ENCODE measurements at regions of chr5 and their contacts with region 1.

Region 1: DNA sequence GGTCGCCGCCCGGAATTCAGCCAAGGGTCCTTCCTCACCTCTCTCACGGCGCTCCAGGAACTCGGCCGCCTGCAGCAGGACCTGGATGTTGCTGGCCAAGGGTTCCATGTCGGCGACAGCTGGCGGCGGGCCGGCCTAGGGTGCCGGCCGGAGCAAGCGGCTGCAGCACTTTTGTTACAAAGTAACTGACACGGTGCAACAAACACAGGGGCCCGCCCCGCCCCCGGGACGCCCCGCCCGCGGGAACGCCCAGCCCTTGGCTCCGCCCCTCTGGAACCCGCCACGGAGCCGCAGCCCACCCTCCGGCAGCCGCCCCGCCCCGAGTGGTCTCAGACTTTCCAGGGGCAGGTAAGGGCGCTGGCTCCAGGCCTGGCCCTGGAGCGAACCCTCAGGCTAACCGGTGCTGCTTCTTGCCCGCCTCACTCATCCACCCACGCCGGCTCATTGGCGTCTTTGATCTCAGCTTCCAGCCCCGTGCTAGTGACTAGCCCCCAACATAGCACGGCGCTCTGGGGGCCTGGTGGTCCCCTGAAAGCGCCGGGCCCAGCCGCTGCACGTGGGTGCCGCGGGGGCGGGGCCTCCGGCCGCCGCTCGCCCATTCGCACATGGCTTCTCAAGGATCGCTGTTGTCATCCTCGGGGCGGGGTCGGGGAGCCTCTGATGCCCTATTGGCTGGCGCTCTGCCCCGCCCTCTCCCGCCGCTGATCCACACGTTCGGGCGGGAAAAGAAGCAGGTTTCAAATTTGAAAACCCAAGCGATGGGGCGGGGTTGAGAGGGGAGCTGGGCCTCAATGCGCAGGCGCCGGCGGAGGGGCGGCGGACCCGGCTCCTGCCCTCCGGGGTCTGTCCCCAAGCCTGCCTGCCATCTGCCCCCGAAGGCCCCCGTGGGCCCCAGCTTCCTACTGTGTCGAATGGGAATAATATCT is at the start of gene MXD3:
- DNase-seq: peak; percentile 97
- ATAC-seq: peak; percentile 82
- H3K4me3 Mint-ChIP-seq: peak within 1 kb of the TSS; percentile 100
- H3K27ac Mint-ChIP-seq: peak within 1 kb of the TSS; percentile 98
- H3K4me1 Mint-ChIP-seq: peaks cover 32% of the 10 kb centered on the region
- H3K27me3 Mint-ChIP-seq: no peaks in the 10 kb centered on the region
- total RNA-seq, gene MXD3: 85.0 to 94.0 TPM

Region 2: DNA sequence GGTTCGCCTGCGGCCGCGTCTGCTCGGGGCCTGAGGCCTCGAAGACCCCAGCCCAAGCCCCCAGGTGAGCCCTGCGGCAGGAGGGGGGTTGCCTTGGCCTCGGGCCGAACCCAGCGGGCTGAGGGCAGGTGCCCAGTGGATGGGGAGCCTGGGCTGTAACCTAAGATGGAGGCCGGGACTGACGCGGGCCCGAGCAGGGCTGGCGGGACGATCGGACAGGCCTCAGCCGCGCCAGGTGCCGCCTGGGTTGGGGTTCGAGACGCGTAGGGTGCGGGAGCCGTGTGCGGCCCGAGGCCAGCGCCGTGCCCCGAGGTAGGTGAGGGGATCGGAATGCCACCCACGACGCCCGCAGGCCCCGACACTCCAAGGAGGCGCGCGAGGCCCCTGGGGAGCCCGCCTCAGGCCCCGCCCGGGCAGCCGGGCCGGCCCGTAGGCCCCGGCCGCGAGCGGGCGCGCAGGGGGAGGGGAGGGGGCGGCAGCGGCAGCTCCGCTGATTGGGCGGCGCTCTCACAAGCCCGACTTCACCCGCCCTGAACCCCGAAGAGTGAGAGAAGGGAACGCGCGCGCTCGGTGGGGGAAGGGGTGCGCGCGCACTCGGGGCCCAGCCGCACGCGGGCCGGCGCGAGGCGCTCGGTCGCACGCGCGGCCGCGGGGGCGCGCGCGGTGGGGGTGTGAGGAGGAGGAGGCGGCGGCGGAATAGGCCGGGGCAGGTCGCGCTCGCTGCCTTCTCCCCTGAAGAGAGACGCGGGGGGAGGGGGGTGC is 178.7 kb before region 1 on chr5 and contains the start of gene NSD1:
- POLR2A ChIA-PET with region 1: interaction called, 15 read pairs
- DNase-seq: peak; percentile 97
- ATAC-seq: peak; percentile 72
- H3K4me3 Mint-ChIP-seq: peak within 1 kb of the TSS; percentile 91
- H3K27ac Mint-ChIP-seq: peak within 1 kb of the TSS; percentile 93
- H3K4me1 Mint-ChIP-seq: peaks cover 37% of the 10 kb centered on the region
- H3K27me3 Mint-ChIP-seq: no peaks in the 10 kb centered on the region
- total RNA-seq, gene NSD1: 96.2 to 101 TPM

Region 3: DNA sequence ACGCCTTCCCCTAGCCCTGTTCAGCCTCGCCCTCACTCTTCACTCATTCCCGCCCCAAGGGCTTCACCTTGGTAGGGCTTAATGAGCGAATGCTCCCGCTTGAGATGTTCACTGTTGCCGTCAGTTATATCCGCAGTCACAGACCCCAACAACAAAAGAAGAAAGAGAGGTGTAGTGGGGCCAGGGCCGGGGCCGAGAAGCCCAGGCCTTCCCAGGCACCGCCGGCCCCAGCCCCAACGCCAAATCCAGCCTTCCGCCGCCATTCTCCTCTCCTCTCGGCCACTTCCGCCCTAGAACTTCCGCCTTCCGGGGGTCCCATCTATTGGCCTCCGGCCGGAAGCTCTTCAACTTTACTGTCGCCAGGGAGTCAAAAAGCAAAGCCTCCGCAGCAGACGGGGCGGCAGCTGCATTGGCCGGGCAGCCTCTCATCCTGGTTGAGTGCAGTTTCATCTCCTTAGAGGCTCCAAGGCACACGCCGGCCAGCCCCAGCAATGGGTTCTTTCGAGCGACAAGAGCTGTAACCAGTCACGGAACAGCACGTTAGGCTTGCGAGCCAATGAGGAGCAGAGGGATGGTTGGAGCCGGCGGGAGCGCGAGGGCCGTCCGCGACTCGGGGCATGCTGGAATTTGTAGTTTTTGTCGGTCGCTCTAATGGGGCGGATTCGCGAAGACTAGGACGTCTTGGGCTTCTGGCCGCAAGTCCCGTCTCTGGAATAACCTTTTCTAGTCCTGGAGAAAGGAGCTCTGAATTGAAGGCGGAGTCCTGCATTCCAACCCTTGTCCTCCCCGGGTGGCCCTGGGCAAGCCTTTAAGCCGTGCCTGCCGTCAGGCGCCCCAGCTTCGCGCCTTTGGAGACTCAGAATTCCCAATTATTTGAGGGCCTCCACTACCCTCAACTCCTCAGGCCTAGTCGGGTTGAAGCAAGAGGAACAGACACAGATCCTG is 39.7 kb after region 1 on chr5 and contains the start of gene LMAN2:
- POLR2A ChIA-PET with region 1: interaction called, 18 read pairs
- DNase-seq: peak; percentile 87
- ATAC-seq: peak; percentile 99
- H3K4me3 Mint-ChIP-seq: peak within 1 kb of the TSS; percentile 99
- H3K27ac Mint-ChIP-seq: peak within 1 kb of the TSS; percentile 100
- H3K4me1 Mint-ChIP-seq: peaks cover 52% of the 10 kb centered on the region
- H3K27me3 Mint-ChIP-seq: no peaks in the 10 kb centered on the region
- total RNA-seq, gene LMAN2: 110 to 116 TPM

Region 4: DNA sequence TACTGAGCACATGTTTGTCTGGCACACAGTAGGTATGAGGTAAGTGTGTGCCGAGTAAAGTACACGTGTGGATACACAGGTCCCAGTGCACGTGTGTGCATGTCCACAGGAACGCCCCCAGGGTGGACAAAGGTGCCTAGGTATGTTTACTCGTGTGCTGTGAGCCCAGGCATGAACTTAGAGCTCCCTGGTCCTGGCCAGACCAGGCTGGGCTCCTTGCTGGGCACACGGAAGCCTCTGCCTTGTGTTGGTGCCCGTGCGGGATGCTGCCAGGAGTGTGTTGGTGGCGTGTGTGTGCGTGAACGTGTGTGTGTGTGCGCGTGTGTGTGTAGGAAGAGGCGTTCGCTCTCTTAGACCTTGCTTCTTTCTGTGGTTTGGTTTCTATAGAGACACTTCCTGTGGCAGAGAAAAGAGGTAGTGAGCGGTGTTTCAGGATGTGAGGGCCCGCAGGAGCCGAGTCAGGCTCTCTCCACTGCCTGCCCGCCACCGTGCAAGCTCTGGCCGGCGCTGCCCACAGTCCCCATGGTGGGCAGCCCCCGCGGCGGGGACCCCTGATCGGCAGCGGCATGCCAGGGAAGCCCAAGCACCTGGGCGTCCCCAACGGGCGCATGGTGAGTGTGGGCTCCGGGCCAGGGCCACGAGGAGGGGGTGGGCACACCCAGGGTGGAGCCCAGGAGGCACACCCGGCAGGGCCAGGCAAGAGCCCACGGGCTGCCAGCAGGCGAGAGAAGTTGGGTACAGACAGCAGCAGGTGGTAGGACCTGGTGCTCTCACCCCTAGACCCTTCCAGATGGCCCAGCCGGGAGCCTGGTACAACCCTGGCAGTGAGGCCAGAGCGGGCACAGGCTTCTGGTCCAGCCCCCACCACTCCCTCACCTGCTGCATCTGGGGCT is 45.7 kb after region 1 on chr5 and contains the start of gene RGS14:
- POLR2A ChIA-PET with region 1: interaction called, 18 read pairs
- DNase-seq: peak; percentile 77
- ATAC-seq: peak; percentile 90
- H3K4me3 Mint-ChIP-seq: peak within 1 kb of the TSS; percentile 92
- H3K27ac Mint-ChIP-seq: peak within 1 kb of the TSS; percentile 83
- H3K4me1 Mint-ChIP-seq: peaks cover 65% of the 10 kb centered on the region
- H3K27me3 Mint-ChIP-seq: no peaks in the 10 kb centered on the region
- total RNA-seq, gene RGS14: 113 to 124 TPM

Region 5: DNA sequence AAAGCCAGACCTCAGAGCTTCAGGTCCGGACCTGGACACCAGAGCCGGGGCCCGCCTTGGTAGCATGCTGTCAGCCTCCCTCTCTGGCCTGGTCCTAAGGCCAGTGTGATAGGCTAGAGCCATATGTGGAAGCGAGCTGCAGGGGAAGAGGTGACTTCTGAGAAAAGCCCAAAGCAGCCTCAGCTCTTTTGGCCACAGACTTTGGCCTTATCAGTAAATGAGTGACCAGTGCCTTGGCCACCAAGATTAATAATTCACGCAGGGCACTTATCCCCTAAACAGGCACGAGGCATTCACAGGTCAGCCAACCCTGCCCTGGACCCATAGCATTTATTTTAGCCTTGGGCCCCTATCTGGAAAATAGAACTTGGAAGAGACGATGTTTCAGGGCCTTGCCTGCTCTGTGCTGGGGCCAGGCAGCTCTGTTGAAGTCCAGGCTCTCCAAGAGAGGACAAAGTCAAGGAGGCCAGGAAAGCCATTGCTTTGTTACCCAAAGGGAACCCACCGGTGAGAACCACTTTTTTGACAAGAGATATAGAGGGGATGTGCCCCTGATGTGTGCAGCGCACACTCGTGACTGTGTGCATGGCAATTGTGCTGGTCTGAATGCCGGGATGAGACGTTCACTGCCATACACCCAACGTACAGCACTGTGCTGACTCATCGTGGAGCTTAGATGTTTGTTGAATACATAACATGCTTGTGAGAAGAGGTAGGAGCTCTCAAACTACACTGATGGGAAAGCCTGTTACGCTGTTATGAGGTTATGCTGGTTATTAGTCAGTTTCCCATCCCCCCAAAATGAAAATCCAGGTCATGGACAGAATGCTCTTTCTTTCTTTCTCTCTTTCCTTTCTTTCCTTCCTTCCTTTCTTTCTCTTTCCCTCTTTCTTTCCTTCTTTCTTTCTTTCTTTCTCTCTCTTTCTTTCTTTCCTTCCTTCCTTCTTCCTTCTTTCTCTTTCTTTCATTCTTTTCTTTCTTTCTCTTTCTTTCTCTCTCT is 67.2 kb after region 1 on chr5:
- POLR2A ChIA-PET with region 1: no interaction called
- DNase-seq: no peak
- ATAC-seq: no peak
- H3K4me3 Mint-ChIP-seq: no peak overlapping the region
- H3K27ac Mint-ChIP-seq: no peak overlapping the region
- H3K4me1 Mint-ChIP-seq: peaks cover 16% of the 10 kb centered on the region
- H3K27me3 Mint-ChIP-seq: no peaks in the 10 kb centered on the region